Activated CD8-positive, alpha-beta T cell treated with anti-CD3 and anti-CD28 coated beads, Interleukin-2, amount 10 ng/mL, durations not matched to agents 7 days and 5 days (primary cell): ENCODE measurements at regions of chr12 and their contacts with region 1.

Region 1: GRCh38 chr12:68040450-68041075 is 51.3 kb downstream of the IFNG-AS1 start:
- DNase-seq: peak; percentile 76
- ATAC-seq: peak; percentile 72
- H3K4me3 Mint-ChIP-seq: no peak overlapping the region
- H3K27ac Mint-ChIP-seq: no peak overlapping the region
- H3K4me1 Mint-ChIP-seq: peaks cover 45% of the 10 kb centered on the region
- H3K27me3 Mint-ChIP-seq: no peaks in the 10 kb centered on the region

Region 2: DNA sequence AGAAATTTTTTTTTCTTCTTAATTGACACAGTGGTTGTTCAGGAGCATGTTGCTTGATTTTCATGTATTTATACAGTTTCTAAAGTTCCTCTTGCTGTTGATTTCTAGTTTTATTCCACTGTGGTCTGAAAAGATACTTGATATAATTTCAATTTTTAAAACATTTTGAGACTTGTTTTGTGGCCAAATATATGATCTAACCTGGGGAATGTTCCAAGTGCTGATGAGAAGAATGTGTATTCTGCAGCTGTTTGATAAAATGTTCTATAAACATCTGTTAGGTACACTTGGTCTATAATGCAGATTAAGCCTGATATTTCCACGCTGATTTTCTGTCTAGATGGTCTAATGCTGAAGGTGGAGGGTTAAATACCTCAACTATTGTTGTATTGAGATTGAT is 202.7 kb before region 1 on chr12:
- CTCF ChIA-PET with region 1: no interaction called
- POLR2A ChIA-PET with region 1: no interaction called
- DNase-seq: no peak
- ATAC-seq: no peak
- H3K4me3 Mint-ChIP-seq: no peak overlapping the region
- H3K27ac Mint-ChIP-seq: no peak overlapping the region
- H3K4me1 Mint-ChIP-seq: peaks cover 3% of the 10 kb centered on the region
- H3K27me3 Mint-ChIP-seq: no peaks in the 10 kb centered on the region

Region 3: DNA sequence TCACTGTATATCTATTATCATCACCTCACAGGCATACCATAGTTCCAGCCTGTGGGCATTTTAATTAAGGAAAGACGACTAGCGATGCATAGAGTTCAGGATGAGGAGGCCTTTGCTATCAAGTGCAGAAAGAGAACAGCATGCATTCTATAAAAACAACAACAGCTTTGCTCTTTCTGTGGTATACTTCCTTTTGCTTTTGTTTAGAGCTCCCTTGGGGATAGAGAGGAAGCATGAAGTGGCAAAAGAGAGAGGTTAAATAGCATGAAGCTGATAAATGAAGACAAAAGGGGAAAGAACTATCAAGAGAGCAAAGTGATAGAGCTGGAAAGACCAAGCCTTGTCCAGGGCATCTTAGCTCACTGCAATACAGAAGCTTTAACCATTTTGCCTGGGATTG is 27.9 kb before region 1 on chr12:
- CTCF ChIA-PET with region 1: interaction called, 18 read pairs
- POLR2A ChIA-PET with region 1: no interaction called
- DNase-seq: no peak
- ATAC-seq: no peak
- H3K4me3 Mint-ChIP-seq: no peak overlapping the region
- H3K27ac Mint-ChIP-seq: no peak overlapping the region
- H3K4me1 Mint-ChIP-seq: peaks cover 11% of the 10 kb centered on the region
- H3K27me3 Mint-ChIP-seq: no peaks in the 10 kb centered on the region

Region 4: DNA sequence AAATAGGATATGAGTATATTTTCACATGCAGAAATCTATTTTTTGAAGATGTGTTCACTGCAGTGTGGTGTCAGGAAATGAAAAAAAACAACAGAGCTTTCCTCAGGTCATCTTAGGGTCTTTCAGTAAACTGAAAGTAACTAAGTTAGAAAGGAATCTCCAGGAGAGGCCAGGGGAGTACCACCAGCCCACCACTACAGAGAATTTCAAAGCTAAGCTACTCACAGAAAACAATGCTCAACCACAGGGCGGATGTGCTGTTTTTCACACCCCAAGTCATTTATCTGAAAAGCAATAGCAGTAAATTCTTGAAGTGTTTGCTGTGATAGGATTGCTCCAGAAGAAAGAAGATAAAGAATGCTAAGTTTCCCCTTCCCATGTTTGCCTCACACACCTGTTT is 40.0 kb after region 1 on chr12:
- CTCF ChIA-PET with region 1: interaction called, 13 read pairs
- POLR2A ChIA-PET with region 1: no interaction called
- DNase-seq: peak; percentile 82
- ATAC-seq: peak; percentile 91
- H3K4me3 Mint-ChIP-seq: peak overlapping the region; percentile 27
- H3K27ac Mint-ChIP-seq: peak overlapping the region; percentile 81
- H3K4me1 Mint-ChIP-seq: peaks cover 35% of the 10 kb centered on the region
- H3K27me3 Mint-ChIP-seq: no peaks in the 10 kb centered on the region

Region 5: DNA sequence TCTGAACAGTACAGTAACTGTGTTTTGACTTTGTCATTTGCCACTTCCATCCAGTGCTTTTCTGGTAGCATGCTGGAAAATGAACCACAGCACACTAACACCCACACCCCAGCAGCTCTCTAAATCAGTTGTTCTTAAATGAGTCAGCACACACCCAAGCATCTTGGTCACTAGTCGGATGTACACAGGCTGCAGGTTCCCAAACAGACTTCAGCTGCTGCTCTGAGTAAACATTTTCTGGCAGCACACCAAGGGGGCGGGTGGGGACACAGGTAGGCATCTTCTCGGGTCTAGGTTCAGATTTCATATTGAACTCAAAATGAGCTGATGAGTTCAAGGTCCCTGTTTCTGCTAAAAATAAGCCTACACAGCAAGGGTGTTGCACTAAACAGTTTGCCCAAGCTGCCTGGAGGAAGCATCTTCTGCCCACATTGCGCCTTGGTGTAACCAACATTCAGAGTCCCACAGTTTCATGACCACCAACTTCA is 79.2 kb after region 1 on chr12:
- CTCF ChIA-PET with region 1: interaction called, 70 read pairs
- POLR2A ChIA-PET with region 1: interaction called, 3 read pairs
- DNase-seq: peak; percentile 74
- ATAC-seq: peak; percentile 92
- H3K4me3 Mint-ChIP-seq: peak overlapping the region; percentile 9
- H3K27ac Mint-ChIP-seq: peak overlapping the region; percentile 74
- H3K4me1 Mint-ChIP-seq: peaks cover 30% of the 10 kb centered on the region
- H3K27me3 Mint-ChIP-seq: no peaks in the 10 kb centered on the region

Region 6: DNA sequence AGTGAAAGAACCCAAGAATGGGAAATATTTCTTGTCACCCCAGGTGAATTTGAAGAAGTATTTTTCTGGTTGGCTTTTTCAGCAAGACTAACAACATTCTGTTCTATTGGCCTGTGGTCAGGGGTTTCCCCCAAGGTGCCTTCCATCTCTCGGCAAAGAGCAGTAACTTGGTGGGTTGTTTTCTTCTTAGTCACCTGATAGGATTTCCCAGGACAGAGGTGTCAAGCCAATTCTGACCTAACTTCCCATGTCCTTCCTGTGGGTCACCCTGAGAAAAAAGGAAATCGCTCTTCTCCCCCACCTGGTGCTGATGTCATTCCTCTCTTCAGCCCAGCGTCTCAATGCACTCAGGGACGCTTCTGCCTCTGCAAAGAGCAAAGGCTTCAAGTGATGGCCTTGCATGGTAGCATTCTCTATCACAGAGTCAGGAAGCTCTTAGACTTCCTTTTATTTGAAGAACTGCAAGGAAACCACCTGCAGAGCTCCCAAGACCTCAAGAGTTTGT is 135.0 kb after region 1 on chr12:
- CTCF ChIA-PET with region 1: interaction called, 26 read pairs
- POLR2A ChIA-PET with region 1: interaction called, 3 read pairs
- DNase-seq: peak; percentile 74
- ATAC-seq: peak; percentile 81
- H3K4me3 Mint-ChIP-seq: peak overlapping the region; percentile 57
- H3K27ac Mint-ChIP-seq: peak overlapping the region; percentile 81
- H3K4me1 Mint-ChIP-seq: peaks cover 61% of the 10 kb centered on the region
- H3K27me3 Mint-ChIP-seq: no peaks in the 10 kb centered on the region

Region 7: GRCh38 chr12:68223083-68223747 is 182.7 kb after region 1 on chr12:
- CTCF ChIA-PET with region 1: interaction called, 73 read pairs
- POLR2A ChIA-PET with region 1: no interaction called
- DNase-seq: peak; percentile 83
- ATAC-seq: peak; percentile 98
- H3K4me3 Mint-ChIP-seq: no peak overlapping the region
- H3K27ac Mint-ChIP-seq: no peak overlapping the region
- H3K4me1 Mint-ChIP-seq: peaks cover 18% of the 10 kb centered on the region
- H3K27me3 Mint-ChIP-seq: peaks cover 13% of the 10 kb centered on the region